PC-3 (cell line): ENCODE measurements at regions of chr1 and their contacts with region 1.

Region 1: DNA sequence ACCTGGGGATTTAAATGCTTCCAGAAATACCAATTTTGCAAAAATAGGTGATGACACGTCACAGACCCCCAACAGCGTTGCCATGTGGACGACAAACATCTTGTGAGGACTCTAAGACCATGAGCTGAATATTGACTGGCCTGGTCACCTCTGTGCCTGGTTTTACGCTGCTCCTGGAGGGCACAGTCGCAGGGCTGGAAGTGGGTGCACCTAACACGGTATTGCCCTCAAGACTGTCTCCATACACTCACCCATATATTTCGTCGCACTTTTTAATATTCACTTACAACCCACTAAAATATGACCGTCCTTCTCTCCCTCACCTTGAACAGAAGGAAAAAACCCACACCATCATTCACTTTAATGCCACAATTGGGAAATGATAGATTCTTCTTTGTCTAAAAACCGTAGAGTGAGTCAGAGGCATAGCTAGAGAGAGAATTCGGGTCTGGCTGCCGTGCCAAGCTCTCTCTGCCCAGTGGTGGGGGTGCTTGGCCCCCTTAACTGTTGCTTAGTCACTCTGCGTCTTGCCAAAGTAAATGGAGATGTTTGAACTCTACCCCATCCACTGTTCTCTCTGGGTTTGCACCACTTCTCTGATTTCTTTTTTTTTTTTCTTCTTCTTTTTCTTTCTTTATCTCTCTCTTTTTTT is 40.8 kb upstream of the UTS2 start:
- DNase-seq: peak; percentile 93
- ATAC-seq: peak; percentile 79
- H3K4me3 ChIP-seq: peak overlapping the region; percentile 49; the same call in 1 of the 2 replicates
- H3K27ac ChIP-seq: peak overlapping the region; percentile 98
- H3K4me1 ChIP-seq: peaks cover 49% of the 10 kb centered on the region
- H3K27me3 ChIP-seq: no peaks in the 10 kb centered on the region
- CTCF ChIP-seq: no peak

Region 2: GRCh38 chr1:7852804-7853683 is 40.6 kb before region 1 on chr1 and contains the start of gene UTS2:
- CTCF ChIA-PET with region 1: no interaction called
- POLR2A ChIA-PET with region 1: no interaction called
- intact Hi-C with region 1: loop called (anchors 5 kb)
- DNase-seq: no peak
- ATAC-seq: no peak
- H3K4me3 ChIP-seq: no peak within 1 kb of the TSS
- H3K27ac ChIP-seq: no peak within 1 kb of the TSS
- H3K4me1 ChIP-seq: no peaks in the 10 kb centered on the region
- H3K27me3 ChIP-seq: no peaks in the 10 kb centered on the region
- CTCF ChIP-seq: no peak
- total RNA-seq, gene UTS2: not detected in 2 replicates

Region 3: GRCh38 chr1:7869136-7869905 is 24.3 kb before region 1 on chr1:
- CTCF ChIA-PET with region 1: no interaction called
- POLR2A ChIA-PET with region 1: no interaction called
- intact Hi-C with region 1: loop called (anchors 1 kb)
- DNase-seq: peak; percentile 92
- ATAC-seq: peak; percentile 87
- H3K4me3 ChIP-seq: no peak overlapping the region
- H3K27ac ChIP-seq: peak overlapping the region; percentile 92
- H3K4me1 ChIP-seq: peaks cover 15% of the 10 kb centered on the region
- H3K27me3 ChIP-seq: no peaks in the 10 kb centered on the region
- CTCF ChIP-seq: no peak

Region 4: DNA sequence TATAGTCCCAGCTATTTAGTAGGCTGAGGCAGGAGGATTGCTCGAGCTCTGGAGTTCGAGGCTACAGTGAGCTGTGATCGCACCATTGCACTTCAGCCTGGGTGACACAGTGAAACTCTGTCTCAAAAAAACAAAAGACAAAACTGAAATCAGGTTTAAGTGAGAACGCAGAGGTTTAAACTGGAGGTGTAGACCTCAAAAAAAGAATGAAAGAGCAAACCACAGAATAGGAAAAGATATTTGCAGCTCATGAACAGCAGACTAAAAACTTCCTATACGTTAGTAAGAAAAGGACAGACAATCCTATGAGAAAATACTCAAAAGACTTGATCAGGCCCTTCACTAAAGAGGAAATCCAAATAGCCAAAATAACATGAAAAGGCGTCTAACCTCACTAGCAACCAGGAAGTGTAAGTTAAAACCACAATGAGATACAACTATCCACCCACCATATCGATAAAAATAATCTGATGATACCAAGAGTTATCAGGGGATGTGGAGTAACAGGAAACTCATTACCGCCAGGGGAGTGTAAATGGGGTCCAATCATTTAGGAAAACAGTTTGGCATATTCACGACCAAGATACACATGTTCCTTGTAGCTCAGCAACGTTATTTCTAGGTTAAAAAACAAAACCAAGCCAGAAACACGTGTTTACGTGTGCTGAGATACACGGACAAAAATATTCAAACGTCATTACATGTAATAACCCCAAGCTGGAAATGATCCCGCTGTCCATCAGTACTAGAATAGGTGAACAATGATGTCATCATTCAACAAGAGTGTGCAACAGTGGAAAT is 37.2 kb after region 1 on chr1:
- CTCF ChIA-PET with region 1: no interaction called
- POLR2A ChIA-PET with region 1: interaction called, 17 read pairs
- intact Hi-C with region 1: no loop called
- DNase-seq: no peak
- ATAC-seq: no peak
- H3K4me3 ChIP-seq: no peak overlapping the region
- H3K27ac ChIP-seq: no peak overlapping the region
- H3K4me1 ChIP-seq: no peaks in the 10 kb centered on the region
- H3K27me3 ChIP-seq: no peaks in the 10 kb centered on the region
- CTCF ChIP-seq: no peak